ENCODE measurements at regions of chr16 and their contacts with region 1.

Region 1: GRCh38 chr16:81737885-81738786 is 41.0 kb upstream of the PLCG2 start:
- DNase-seq: peak; percentile 75
- H3K4me3 Mint-ChIP-seq: peak overlapping the region; percentile 24
- H3K27ac Mint-ChIP-seq: no peak overlapping the region
- H3K4me1 Mint-ChIP-seq: peaks cover 11% of the 10 kb centered on the region
- H3K27me3 Mint-ChIP-seq: peaks cover 4% of the 10 kb centered on the region

Region 2: GRCh38 chr16:81035398-81035974 is 702.6 kb before region 1 on chr16 and contains the start of gene ATMIN:
- intact Hi-C with region 1: loop called (anchors 5 kb)
- DNase-seq: peak; percentile 80
- H3K4me3 Mint-ChIP-seq: peak within 1 kb of the TSS; percentile 82
- H3K27ac Mint-ChIP-seq: peak within 1 kb of the TSS; percentile 43
- H3K4me1 Mint-ChIP-seq: peaks cover 18% of the 10 kb centered on the region
- H3K27me3 Mint-ChIP-seq: no peaks in the 10 kb centered on the region
- total RNA-seq, gene ATMIN: 25.8 and 27.1 TPM in 2 replicates

Region 3: DNA sequence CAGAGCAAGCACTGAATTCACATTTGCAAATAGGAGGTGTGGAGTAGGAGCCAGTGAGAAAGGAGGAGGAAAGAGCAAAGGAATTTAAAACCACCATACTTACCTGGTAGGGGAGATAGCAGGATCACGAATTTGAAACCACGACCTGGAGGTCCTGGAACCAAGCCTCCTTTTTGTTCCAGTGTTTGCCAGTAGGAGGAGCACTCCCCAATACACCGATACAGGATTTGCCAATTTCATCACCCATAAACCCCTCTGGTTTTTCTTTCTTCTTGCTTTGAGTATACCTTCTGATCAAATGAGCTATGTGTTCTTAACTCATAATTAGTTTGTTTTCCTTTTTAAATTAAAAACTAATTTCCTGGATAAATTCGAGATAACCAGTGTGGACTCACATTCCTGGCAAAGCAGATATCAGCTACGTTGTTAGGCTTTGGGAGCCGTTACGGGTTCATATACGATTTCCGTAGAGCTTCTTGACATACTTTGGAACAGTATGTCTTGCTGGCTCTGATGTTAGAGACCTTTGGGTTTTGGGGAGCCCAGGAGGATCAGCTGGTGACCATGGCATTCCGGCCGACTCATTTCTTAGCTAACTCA is 477.0 kb before region 1 on chr16:
- intact Hi-C with region 1: loop called (anchors 5 kb)
- DNase-seq: no peak
- H3K4me3 Mint-ChIP-seq: no peak overlapping the region
- H3K27ac Mint-ChIP-seq: no peak overlapping the region
- H3K4me1 Mint-ChIP-seq: peaks cover 2% of the 10 kb centered on the region
- H3K27me3 Mint-ChIP-seq: peaks cover 3% of the 10 kb centered on the region

Region 4: DNA sequence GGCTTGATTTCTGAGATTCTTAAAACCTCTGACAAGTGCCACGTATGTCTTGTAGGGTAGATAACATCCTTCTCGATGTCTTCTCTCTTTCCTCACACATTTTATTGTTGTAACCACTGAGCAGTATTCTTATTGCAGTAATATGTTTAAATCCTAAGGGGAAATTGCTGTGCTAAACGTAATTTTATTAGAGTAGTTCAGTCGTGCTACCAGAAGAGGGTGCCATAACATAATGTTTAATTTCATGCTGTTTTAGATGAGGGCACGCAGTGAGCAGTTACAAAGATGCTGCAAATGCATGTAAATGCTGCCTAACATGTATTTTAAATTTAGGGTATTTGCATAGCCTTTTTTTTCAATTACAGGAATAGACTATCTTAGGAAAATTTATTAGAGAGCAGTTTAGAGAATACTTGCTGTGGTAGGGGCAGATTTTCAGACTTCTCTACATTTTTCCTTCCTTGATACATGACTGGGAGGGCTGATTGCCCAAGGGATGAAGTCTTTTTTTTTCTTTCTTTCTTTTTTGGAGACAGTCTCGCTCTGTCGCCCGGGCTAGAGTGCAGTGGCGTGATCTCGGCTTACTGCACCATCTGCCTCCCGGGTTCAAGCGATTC is 371.7 kb before region 1 on chr16:
- intact Hi-C with region 1: loop called (anchors 1 kb)
- DNase-seq: no peak
- H3K4me3 Mint-ChIP-seq: no peak overlapping the region
- H3K27ac Mint-ChIP-seq: no peak overlapping the region
- H3K4me1 Mint-ChIP-seq: peaks cover 7% of the 10 kb centered on the region
- H3K27me3 Mint-ChIP-seq: no peaks in the 10 kb centered on the region